Ascending aorta (tissue), 2 donors: ENCODE measurements at regions of chr22 and their contacts with region 1.

Region 1: DNA sequence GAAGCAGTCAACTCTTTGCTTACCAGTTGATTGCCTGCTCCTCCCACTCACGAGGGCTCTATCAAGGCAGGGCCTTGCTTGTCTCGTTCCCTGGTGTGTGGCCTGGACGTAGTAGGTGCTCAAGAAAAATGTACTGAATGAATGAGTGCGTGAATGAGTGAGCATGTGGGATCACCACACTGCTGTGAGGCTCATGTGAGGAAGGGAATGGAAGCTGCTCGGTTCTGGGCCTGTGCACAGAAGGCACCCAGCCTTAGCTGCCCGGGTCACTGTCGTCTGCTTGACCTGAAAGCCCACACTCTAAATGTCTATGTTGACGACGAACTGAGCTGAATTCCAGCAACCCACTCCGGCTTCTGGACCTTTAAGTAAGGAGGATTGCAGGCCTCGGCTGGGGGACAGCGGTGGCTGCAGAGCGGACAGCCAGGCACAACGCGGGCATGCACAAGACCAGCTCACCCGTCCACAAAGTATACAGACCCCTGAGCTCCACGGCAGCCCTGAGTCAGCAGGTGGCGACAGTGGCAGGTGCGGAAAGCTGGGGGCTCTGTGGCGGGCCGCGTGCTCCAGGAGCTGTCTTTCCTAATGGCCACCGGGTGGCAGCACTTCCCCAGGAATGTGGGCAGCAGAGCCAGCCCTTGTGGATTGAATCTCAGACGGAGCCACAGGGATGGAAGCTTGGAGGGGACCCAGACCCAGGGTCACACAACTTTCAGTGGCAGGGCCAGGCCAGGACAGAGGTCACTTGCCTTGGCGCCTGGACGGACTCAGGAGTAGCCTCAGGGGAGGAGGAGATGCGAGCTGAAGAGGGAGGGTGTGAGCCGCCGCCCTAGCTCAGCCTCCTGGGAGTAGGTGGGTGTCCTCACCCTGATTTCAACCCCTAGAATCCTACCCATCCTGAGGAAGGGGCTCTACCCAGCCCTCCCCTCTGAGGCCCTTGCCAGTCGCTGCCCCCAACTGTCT is 5.0 kb upstream of the PICK1 start:
- DNase-seq: peak in 1 of 2 donors; percentile 90
- H3K4me3 ChIP-seq: no peak overlapping the region
- H3K27ac ChIP-seq: no peak overlapping the region
- H3K4me1 ChIP-seq: peaks cover 6 to 7% of the 10 kb centered on the region in 2 donors
- H3K27me3 ChIP-seq: no peaks in the 10 kb centered on the region
- CTCF ChIP-seq: peak; percentile 82 to 93 (median 93)

Region 2: GRCh38 chr22:38153821-38154562 is 101.8 kb after region 1 on chr22:
- intact Hi-C with region 1: loop called (anchors 5 kb)
- DNase-seq: no peak
- H3K4me3 ChIP-seq: no peak overlapping the region
- H3K27ac ChIP-seq: no peak overlapping the region
- H3K4me1 ChIP-seq: no peaks in the 10 kb centered on the region
- H3K27me3 ChIP-seq: no peaks in the 10 kb centered on the region
- CTCF ChIP-seq: no peak

Region 3: DNA sequence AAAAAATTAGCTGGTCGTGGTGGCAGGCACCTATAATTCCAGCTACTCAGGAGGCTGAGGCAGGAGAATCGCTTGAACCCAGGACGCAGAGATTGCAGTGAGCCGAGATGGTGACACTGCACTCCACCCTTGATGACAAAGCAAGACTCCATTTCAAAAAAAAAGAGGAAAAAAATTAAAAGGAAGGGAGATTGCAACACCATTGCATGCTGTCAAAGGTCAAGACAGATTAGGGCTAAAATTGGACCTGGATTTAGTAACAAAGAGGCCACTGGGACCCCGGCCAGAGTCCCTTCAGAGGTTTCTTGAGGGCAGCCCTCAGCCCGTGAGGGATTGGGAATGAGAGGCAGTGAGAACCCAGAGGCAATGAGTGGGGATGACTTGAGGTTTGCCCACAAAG is 141.4 kb after region 1 on chr22:
- intact Hi-C with region 1: no loop called
- DNase-seq: no peak
- H3K4me3 ChIP-seq: no peak overlapping the region
- H3K27ac ChIP-seq: no peak overlapping the region
- H3K4me1 ChIP-seq: peaks cover 0 to 11% of the 10 kb centered on the region in 2 donors
- H3K27me3 ChIP-seq: no peaks in the 10 kb centered on the region
- CTCF ChIP-seq: no peak

Region 4: GRCh38 chr22:38305471-38306448 is 253.6 kb after region 1 on chr22:
- intact Hi-C with region 1: no loop called
- DNase-seq: no peak
- H3K4me3 ChIP-seq: peak overlapping the region in 1 of 2 donors; percentile 17
- H3K27ac ChIP-seq: peak overlapping the region; percentile 78 to 79
- H3K4me1 ChIP-seq: peaks cover 28 to 59% of the 10 kb centered on the region in 2 donors
- H3K27me3 ChIP-seq: no peaks in the 10 kb centered on the region
- CTCF ChIP-seq: no peak

Region 5: GRCh38 chr22:38681784-38682335 is 629.7 kb after region 1 on chr22 and contains the start of gene TOMM22:
- intact Hi-C with region 1: loop called (anchors 10 kb)
- DNase-seq: peak; percentile 12 to 92
- H3K4me3 ChIP-seq: peak within 1 kb of the TSS; percentile 77 to 94
- H3K27ac ChIP-seq: peak within 1 kb of the TSS; percentile 59 to 61
- H3K4me1 ChIP-seq: peaks cover 0 to 3% of the 10 kb centered on the region in 2 donors
- H3K27me3 ChIP-seq: no peaks in the 10 kb centered on the region
- CTCF ChIP-seq: peak; percentile 8 to 76 (median 68)
- total RNA-seq, gene TOMM22: 19.3 TPM